Tibial artery (tissue), 4 donors: ENCODE measurements at regions of chr3 and their contacts with region 1.

Region 1: GRCh38 chr3:12608376-12608775 is 51.5 kb downstream of the MKRN2 start:
- DNase-seq: no peak
- H3K4me3 ChIP-seq: no peak overlapping the region
- H3K27ac ChIP-seq: no peak overlapping the region
- H3K4me1 ChIP-seq: peaks cover 0 to 7% (median 4%) of the 10 kb centered on the region in 4 donors
- H3K27me3 ChIP-seq: no peaks in the 10 kb centered on the region
- CTCF ChIP-seq: no peak

Region 2: DNA sequence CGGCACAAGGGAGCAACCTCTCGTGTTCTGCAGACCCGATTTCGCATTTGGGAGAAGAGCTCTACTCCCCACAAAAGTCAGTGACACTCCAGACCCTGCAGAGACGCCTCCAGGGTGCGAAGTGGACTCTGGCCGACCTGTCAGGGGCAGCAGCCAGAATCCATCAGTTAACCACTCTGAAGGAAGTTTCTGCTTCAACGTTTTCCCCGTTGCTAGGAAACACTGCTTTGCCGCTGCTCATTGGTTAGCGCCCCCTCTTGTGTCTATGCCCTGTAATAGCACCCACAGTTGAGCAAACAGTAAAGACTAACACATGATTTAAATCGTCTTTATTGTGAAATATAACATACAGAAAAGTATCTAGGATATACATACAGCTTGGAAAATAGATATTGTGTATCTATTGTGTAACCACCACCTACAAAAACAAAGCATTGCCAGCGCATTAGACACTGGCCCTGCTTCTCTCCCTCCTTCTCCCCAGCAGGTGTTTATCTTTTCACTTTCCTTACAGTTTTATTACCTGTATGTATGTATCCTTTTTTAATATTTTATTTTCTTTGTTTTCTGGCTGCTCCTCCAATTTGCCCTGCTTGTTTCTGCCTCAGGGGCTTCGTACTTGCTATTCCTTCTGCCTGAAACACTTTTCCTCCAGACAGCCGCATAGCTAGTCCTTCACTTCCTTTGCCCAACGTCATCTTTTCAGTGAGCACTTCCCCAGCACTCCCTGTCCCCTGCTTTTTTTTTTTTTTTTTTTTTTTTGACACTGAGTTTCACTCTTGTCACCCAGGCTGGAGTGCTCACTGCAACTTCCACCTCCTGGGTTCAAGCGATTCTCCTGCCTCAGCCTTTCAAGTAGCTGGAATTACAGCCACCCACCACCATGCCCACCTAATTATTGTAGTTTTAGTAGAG is 111.9 kb after region 1 on chr3:
- intact Hi-C with region 1: loop called (anchors 5 kb)
- DNase-seq: peak; percentile 77 to 82
- H3K4me3 ChIP-seq: peak overlapping the region; percentile 34 to 47
- H3K27ac ChIP-seq: peak overlapping the region in 1 of 2 donors; percentile 18
- H3K4me1 ChIP-seq: peaks cover 0 to 10% (median 4%) of the 10 kb centered on the region in 4 donors
- H3K27me3 ChIP-seq: no peaks in the 10 kb centered on the region
- CTCF ChIP-seq: peak; percentile 91 to 93